Sigmoid colon (tissue), 7 donors: ENCODE measurements at regions of chr18 and their contacts with region 1.

Region 1: GRCh38 chr18:31860488-31860887 is 82.4 kb downstream of the TRAPPC8 start:
- DNase-seq: no peak
- H3K4me3 ChIP-seq: no peak overlapping the region
- H3K27ac ChIP-seq: no peak overlapping the region
- H3K4me1 ChIP-seq: no peaks in the 10 kb centered on the region
- H3K27me3 ChIP-seq: no peaks in the 10 kb centered on the region
- CTCF ChIP-seq: no peak
- EP300 ChIP-seq: no peak
- POLR2A ChIP-seq: no peak

Region 2: GRCh38 chr18:31596081-31596872 is 264.2 kb before region 1 on chr18:
- intact Hi-C with region 1: no loop called
- DNase-seq: no peak
- H3K4me3 ChIP-seq: no peak overlapping the region
- H3K27ac ChIP-seq: peak overlapping the region in 1 of 4 donors; percentile 23
- H3K4me1 ChIP-seq: no peaks in the 10 kb centered on the region
- H3K27me3 ChIP-seq: no peaks in the 10 kb centered on the region
- CTCF ChIP-seq: no peak
- EP300 ChIP-seq: no peak
- POLR2A ChIP-seq: no peak

Region 3: DNA sequence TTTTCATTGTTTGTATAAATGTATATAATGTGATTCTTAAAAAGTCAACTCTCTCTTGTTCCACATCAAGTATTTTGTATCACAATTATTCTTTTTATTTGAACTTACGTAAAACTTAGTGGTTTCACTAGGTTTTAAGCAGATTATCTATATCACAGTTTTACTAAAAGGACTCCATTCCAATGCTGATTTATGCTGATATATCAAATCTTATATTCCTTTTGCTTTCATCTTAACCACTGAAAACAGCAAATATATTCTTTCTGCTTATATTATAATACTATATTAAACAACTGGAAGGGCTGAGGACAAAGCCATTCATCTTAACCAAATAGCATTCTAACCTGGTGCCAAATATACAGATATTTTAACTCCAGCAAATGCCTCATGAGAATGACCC is 58.2 kb after region 1 on chr18:
- intact Hi-C with region 1: loop called (anchors 10 kb)
- DNase-seq: no peak
- H3K4me3 ChIP-seq: no peak overlapping the region
- H3K27ac ChIP-seq: no peak overlapping the region
- H3K4me1 ChIP-seq: no peaks in the 10 kb centered on the region
- H3K27me3 ChIP-seq: no peaks in the 10 kb centered on the region
- CTCF ChIP-seq: no peak
- EP300 ChIP-seq: no peak
- POLR2A ChIP-seq: no peak